Activated CD4-positive, alpha-beta memory T cell treated with anti-CD3 and anti-CD28 coated beads for 36 hours (primary cell): ENCODE measurements at regions of chr1 and their contacts with region 1.

Region 1: GRCh38 chr1:67053785-67054772 is at the start of gene SLC35D1:
- DNase-seq: peak; percentile 84
- H3K4me3 Mint-ChIP-seq: peak within 1 kb of the TSS; percentile 85
- H3K27ac Mint-ChIP-seq: peak within 1 kb of the TSS; percentile 87
- H3K4me1 Mint-ChIP-seq: peaks cover 24% of the 10 kb centered on the region
- H3K27me3 Mint-ChIP-seq: no peaks in the 10 kb centered on the region
- total RNA-seq, gene SLC35D1: 11.0 to 11.1 TPM

Region 2: GRCh38 chr1:66924756-66925557 is 129.1 kb before region 1 on chr1 and contains the starts of genes DNAI4 and MIER1:
- CTCF ChIA-PET with region 1: no interaction called
- POLR2A ChIA-PET with region 1: interaction called, 3 read pairs
- intact Hi-C with region 1: loop called (anchors 1 kb)
- DNase-seq: peak; percentile 99
- H3K4me3 Mint-ChIP-seq: peak within 1 kb of the TSS; percentile 97
- H3K27ac Mint-ChIP-seq: peak within 1 kb of the TSS; percentile 96
- H3K4me1 Mint-ChIP-seq: peaks cover 53% of the 10 kb centered on the region
- H3K27me3 Mint-ChIP-seq: no peaks in the 10 kb centered on the region
- total RNA-seq, gene DNAI4: 1.4 to 1.6 TPM
- total RNA-seq, gene MIER1: 54.7 to 58.8 TPM

Region 3: GRCh38 chr1:66938613-66939012 is 115.5 kb before region 1 on chr1:
- CTCF ChIA-PET with region 1: no interaction called
- POLR2A ChIA-PET with region 1: no interaction called
- intact Hi-C with region 1: no loop called
- DNase-seq: no peak
- H3K4me3 Mint-ChIP-seq: no peak overlapping the region
- H3K27ac Mint-ChIP-seq: no peak overlapping the region
- H3K4me1 Mint-ChIP-seq: peaks cover 81% of the 10 kb centered on the region
- H3K27me3 Mint-ChIP-seq: no peaks in the 10 kb centered on the region

Region 4: DNA sequence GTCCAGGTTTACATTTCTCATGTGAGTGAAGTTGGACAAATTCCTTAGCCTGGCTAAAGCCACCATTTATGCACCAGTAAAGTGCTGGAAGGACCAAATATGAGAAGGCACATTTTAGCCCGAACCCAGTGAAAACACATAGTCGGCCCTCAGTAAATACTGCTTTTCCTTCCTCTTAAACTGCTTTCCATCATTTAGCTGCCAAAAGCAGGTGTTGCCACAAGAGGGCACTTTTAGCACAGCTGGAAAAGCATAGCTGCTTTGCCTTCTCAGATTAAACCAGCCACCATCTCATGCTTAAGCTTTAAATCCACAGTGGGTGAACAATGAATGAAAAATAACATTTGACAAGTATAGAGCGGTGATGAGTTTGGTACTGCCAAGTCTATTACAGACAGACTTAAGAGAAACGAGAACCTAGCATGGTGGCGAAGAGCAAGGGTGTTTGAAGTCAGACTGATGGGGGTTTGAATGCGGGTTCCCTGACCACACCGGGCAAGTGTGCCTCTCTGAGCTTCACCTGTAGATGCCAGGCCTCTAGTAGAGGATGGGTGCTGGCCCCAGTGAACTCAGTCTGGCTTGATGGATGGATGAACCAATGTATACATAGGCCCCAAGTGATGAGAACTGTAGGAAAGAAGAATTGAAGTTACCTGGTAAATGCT is 57.9 kb before region 1 on chr1:
- CTCF ChIA-PET with region 1: interaction called, 7 read pairs
- POLR2A ChIA-PET with region 1: no interaction called
- intact Hi-C with region 1: loop called (anchors 2 kb)
- DNase-seq: peak; percentile 78
- H3K4me3 Mint-ChIP-seq: no peak overlapping the region
- H3K27ac Mint-ChIP-seq: peak overlapping the region; percentile 25
- H3K4me1 Mint-ChIP-seq: peaks cover 16% of the 10 kb centered on the region
- H3K27me3 Mint-ChIP-seq: no peaks in the 10 kb centered on the region

Region 5: DNA sequence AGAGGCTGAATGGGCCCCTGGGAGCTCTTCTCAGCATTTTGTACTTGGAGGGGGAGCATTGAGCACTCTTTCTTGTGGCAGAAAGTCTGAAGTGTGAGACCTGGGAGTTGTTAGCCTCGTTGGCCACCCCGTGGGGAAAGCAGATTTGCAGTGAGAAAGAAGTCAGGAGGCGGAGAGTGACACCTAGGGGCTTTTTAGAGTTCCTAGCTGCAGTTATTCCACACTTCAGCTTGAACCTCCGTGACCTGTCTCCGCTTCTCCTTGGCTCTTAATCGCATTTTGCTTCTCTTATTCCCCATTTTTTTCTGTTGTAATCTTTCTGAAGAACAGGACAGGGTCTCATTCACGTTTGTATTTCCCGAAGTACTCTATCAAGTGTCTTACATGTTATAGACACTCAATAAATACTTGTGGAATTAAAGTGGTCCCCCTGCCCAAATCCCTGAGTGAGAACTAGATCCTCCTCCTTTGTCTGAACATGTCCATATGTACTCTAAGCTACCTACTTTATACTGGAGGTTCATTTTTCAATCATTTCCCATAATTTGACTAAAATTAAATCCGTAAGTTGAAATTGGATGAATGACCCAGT is 95.2 kb after region 1 on chr1:
- CTCF ChIA-PET with region 1: interaction called, 8 read pairs
- POLR2A ChIA-PET with region 1: no interaction called
- intact Hi-C with region 1: loop called (anchors 2 kb)
- DNase-seq: peak; percentile 77
- H3K4me3 Mint-ChIP-seq: no peak overlapping the region
- H3K27ac Mint-ChIP-seq: no peak overlapping the region
- H3K4me1 Mint-ChIP-seq: peaks cover 28% of the 10 kb centered on the region
- H3K27me3 Mint-ChIP-seq: peaks cover 10% of the 10 kb centered on the region

Region 6: DNA sequence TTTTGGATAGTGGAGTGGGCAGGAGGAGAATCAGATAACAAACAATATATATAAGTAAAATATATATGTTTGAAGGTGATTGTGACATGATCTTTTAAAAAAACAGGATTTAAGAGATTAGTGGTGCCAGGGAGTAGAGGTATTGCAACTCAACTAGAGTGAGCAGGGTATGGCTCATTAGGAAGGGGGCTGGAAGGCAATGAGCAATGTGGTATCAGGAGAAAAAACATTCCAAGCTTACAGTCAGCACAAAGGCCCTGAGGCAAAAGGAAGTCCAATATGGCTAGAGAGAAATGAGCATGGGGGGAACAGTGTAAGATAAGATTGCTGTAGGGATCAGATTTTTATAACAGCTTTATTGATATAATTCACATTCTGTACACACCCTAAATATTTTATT is 625.6 kb after region 1 on chr1:
- CTCF ChIA-PET with region 1: no interaction called
- POLR2A ChIA-PET with region 1: no interaction called
- intact Hi-C with region 1: no loop called
- DNase-seq: no peak
- H3K4me3 Mint-ChIP-seq: no peak overlapping the region
- H3K27ac Mint-ChIP-seq: no peak overlapping the region
- H3K4me1 Mint-ChIP-seq: peaks cover 34% of the 10 kb centered on the region
- H3K27me3 Mint-ChIP-seq: no peaks in the 10 kb centered on the region